Gastrocnemius medialis (tissue), 4 donors: ENCODE measurements at regions of chr11 and their contacts with region 1.

Region 1: GRCh38 chr11:109734566-109734965 is 312.6 kb downstream of the C11orf87 start:
- DNase-seq: no peak
- ATAC-seq: no peak
- H3K4me3 ChIP-seq: no peak overlapping the region
- H3K27ac ChIP-seq: no peak overlapping the region
- H3K4me1 ChIP-seq: no peaks in the 10 kb centered on the region
- H3K27me3 ChIP-seq: no peaks in the 10 kb centered on the region
- CTCF ChIP-seq: no peak
- POLR2A ChIP-seq: no peak

Region 2: GRCh38 chr11:109677876-109678275 is 56.7 kb before region 1 on chr11:
- in situ Hi-C with region 1: loop called in 1 of 4 experiments (anchors 10 kb)
- intact Hi-C with region 1: no loop called
- DNase-seq: no peak
- ATAC-seq: no peak
- H3K4me3 ChIP-seq: no peak overlapping the region
- H3K27ac ChIP-seq: no peak overlapping the region
- H3K4me1 ChIP-seq: no peaks in the 10 kb centered on the region
- H3K27me3 ChIP-seq: no peaks in the 10 kb centered on the region
- CTCF ChIP-seq: no peak
- POLR2A ChIP-seq: no peak

Region 3: DNA sequence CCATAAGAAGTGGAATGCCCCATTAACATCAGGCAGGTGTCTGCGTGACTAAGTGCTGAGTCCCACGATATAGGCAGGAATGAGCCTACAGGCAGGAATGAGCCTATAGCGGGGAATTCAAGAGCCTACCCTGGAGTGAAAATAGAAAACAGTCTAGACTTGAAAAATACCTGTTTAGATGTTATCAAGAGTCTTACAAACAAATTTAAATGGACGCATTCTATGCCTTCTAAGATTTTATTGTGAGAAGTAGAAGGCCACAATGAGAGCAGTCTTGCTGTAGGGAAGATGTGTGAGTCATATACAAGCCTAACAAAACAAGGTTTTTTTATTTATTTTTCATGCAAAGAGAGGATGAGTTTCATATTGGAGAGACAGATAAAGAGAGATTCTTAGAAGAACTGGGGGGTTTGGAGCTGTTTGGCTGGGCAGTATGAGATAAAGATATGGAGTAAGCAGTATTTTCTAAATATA is 157.8 kb after region 1 on chr11:
- in situ Hi-C with region 1: no loop called
- intact Hi-C with region 1: no loop called
- DNase-seq: no peak
- ATAC-seq: no peak
- H3K4me3 ChIP-seq: no peak overlapping the region
- H3K27ac ChIP-seq: no peak overlapping the region
- H3K4me1 ChIP-seq: no peaks in the 10 kb centered on the region
- H3K27me3 ChIP-seq: no peaks in the 10 kb centered on the region
- CTCF ChIP-seq: no peak
- POLR2A ChIP-seq: no peak

Region 4: DNA sequence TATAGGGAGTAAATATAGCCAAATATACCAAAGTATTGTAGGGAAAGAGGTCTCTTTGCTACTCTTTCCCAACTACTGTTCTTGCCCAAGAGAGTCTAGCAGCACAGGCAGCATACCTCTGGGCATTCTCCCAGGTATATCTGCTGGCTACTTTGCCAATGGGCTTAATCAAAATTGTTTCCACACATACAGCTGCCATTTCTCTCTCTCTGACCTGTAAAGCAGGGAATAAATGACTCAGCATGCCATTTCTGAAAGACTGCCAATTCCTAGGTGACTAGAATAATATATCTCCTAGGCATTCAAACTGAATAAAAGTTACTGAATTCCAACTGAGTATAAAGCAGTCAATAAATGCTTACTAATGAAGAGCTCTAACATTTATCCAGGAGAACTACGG is 517.3 kb after region 1 on chr11:
- in situ Hi-C with region 1: no loop called
- intact Hi-C with region 1: no loop called
- DNase-seq: peak; percentile 27 to 76
- ATAC-seq: peak; percentile 99
- H3K4me3 ChIP-seq: no peak overlapping the region
- H3K27ac ChIP-seq: peak overlapping the region; percentile 63 to 81 (median 74)
- H3K4me1 ChIP-seq: peaks cover 20 to 21% of the 10 kb centered on the region in 2 donors
- H3K27me3 ChIP-seq: no peaks in the 10 kb centered on the region
- CTCF ChIP-seq: no peak
- POLR2A ChIP-seq: no peak